ENCODE measurements at regions of chr17 and their contacts with region 1.

Region 1: GRCh38 chr17:74736513-74737298 is at the start of gene RAB37:
- DNase-seq: peak in 7 of 9 donors; percentile 35 to 59 (median 46)
- ATAC-seq: peak; percentile 66
- H3K4me3 ChIP-seq: peak within 1 kb of the TSS; percentile 95
- H3K4me3 Mint-ChIP-seq: peak within 1 kb of the TSS; percentile 85 to 97 (median 92)
- H3K27ac ChIP-seq: peak within 1 kb of the TSS; percentile 71
- H3K27ac Mint-ChIP-seq: peak within 1 kb of the TSS; percentile 79 to 99 (median 93)
- H3K4me1 ChIP-seq: peaks cover 39 to 40% of the 10 kb centered on the region in 2 donors
- H3K4me1 Mint-ChIP-seq: peaks cover 43 to 55% (median 52%) of the 10 kb centered on the region in 7 donors
- H3K27me3 ChIP-seq: no peaks in the 10 kb centered on the region
- H3K27me3 Mint-ChIP-seq: peaks cover 0 to 17% (median 0%) of the 10 kb centered on the region in 5 donors
- total RNA-seq, gene RAB37: 23.6 to 58.5 (median 34.4) TPM

Region 2: DNA sequence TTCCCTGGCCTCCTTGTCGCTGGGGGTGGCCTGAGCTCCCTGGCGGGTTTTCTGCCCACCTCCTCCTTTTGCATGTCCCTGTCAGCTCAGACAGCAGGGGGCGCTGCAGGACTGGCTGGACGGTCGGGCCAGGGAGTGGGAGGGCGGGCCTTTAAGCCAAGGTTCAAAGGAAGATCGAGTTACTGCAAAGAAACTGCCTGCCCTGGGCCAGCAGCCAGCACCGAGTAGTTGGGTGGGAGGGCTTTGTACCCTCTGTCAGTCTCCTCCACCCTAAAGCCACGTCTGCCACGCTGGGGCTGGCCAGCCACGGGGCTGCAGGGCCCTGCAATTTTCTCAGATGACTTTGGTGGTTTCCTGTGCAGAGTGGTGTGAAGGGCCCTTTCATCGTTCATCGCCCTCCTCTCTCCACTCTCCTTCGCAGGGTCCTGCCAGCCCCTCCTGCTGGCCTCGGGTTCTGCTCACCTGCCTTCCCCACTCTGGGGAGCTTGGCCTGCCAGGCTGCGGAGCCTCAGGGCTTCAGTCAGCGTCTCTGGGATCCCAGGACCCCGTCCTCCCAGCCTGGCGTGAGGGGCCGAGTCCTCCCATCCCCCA is 357.1 kb before region 1 on chr17:
- CTCF ChIA-PET with region 1: interaction called, 3 read pairs
- POLR2A ChIA-PET with region 1: no interaction called
- intact Hi-C with region 1: loop called in 1 of 2 experiments (anchors 2 kb)
- DNase-seq: peak; percentile 70 to 94 (median 85)
- ATAC-seq: peak; percentile 95
- H3K4me3 ChIP-seq: peak overlapping the region; percentile 19
- H3K4me3 Mint-ChIP-seq: peak overlapping the region in 1 of 10 donors; percentile 7
- H3K27ac ChIP-seq: no peak overlapping the region
- H3K27ac Mint-ChIP-seq: peak overlapping the region in 1 of 9 donors; percentile 41
- H3K4me1 ChIP-seq: peaks cover 8 to 10% of the 10 kb centered on the region in 2 donors
- H3K4me1 Mint-ChIP-seq: peaks cover 0 to 7% (median 0%) of the 10 kb centered on the region in 7 donors
- H3K27me3 ChIP-seq: no peaks in the 10 kb centered on the region
- H3K27me3 Mint-ChIP-seq: peaks cover 0 to 18% (median 0%) of the 10 kb centered on the region in 5 donors

Region 3: GRCh38 chr17:74659898-74660297 is 76.8 kb before region 1 on chr17:
- CTCF ChIA-PET with region 1: interaction called, 166 read pairs
- POLR2A ChIA-PET with region 1: interaction called, 37 read pairs
- intact Hi-C with region 1: loop called (anchors 1 kb)
- DNase-seq: no peak
- ATAC-seq: no peak
- H3K4me3 ChIP-seq: no peak overlapping the region
- H3K4me3 Mint-ChIP-seq: no peak overlapping the region
- H3K27ac ChIP-seq: no peak overlapping the region
- H3K27ac Mint-ChIP-seq: peak overlapping the region in 1 of 9 donors; percentile 32
- H3K4me1 ChIP-seq: peaks cover 0 to 3% of the 10 kb centered on the region in 2 donors
- H3K4me1 Mint-ChIP-seq: peaks cover 4 to 9% (median 6%) of the 10 kb centered on the region in 7 donors
- H3K27me3 ChIP-seq: peaks cover 0 to 3% of the 10 kb centered on the region in 2 donors
- H3K27me3 Mint-ChIP-seq: peaks cover 29 to 78% (median 36%) of the 10 kb centered on the region in 5 donors

Region 4: DNA sequence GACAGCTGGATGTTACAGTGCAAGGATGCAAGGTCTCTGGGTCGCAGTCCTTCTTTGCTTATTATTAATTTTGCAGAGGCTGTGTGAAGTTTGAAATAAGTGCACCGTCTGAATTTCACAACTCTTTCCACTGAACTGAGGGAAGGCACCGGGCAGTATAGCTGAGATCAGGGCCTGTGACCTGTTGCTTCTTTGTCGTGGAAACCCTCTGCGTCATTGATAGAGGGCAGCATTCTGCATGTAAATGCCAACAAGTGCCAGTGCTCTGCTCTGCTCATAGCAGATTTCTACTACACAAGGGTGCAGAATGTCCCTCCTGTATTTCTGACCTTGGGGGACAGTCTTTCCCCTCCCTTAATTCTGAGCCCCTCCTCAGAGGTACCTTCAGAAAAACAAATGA is 49.9 kb before region 1 on chr17:
- CTCF ChIA-PET with region 1: interaction called, 3 read pairs
- POLR2A ChIA-PET with region 1: interaction called, 3 read pairs
- intact Hi-C with region 1: loop called (anchors 2 to 10 kb)
- DNase-seq: no peak
- ATAC-seq: peak; percentile 39
- H3K4me3 ChIP-seq: no peak overlapping the region
- H3K4me3 Mint-ChIP-seq: no peak overlapping the region
- H3K27ac ChIP-seq: no peak overlapping the region
- H3K27ac Mint-ChIP-seq: no peak overlapping the region
- H3K4me1 ChIP-seq: no peaks in the 10 kb centered on the region
- H3K4me1 Mint-ChIP-seq: peaks cover 0 to 24% (median 0%) of the 10 kb centered on the region in 7 donors
- H3K27me3 ChIP-seq: no peaks in the 10 kb centered on the region
- H3K27me3 Mint-ChIP-seq: peaks cover 0 to 23% (median 7%) of the 10 kb centered on the region in 5 donors

Region 5: DNA sequence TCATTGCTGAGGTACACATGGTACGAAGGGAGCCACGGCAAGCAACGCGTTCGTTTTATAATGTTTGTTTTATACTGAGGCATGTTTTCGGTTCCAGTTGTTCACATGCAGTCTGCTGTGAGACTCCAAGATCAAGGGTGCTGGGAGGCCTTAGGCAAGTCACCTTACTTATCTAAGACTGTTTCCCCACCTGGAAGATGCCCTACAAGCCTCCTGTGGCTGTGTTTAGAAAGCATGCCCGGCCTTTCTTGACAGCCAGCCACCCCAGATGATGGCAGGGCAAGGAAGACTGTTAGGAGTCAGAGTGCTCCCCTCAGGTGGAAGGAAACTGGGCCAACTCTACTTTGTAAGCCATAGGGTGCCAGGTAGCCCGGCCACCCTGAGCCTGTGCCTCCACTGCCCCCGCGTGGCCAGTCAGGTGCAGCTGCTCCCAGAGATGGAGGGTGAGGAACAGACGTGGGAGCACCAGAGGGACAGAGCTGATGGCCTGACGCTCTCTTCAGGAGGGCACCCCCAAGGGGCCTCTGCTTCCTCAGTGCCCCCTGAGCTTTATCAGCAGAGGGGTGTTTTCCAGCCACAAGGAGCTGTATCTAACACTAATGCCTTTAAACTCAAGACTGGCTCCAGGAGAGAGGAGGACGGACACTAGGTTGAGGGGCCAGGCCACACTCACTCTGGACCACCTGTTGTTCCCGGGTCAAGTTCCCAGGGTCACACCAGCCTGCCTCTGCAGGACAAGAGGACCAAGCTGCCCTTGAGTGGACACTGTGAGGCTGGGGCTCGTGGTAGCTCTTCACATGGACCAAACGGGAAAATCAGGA is 34.0 kb after region 1 on chr17:
- CTCF ChIA-PET with region 1: interaction called, 26 read pairs
- POLR2A ChIA-PET with region 1: interaction called, 32 read pairs
- intact Hi-C with region 1: no loop called
- DNase-seq: peak; percentile 66 to 82 (median 78)
- ATAC-seq: peak; percentile 95
- H3K4me3 ChIP-seq: no peak overlapping the region
- H3K4me3 Mint-ChIP-seq: peak overlapping the region in 2 of 10 donors; percentile 16 to 21
- H3K27ac ChIP-seq: peak overlapping the region; percentile 4
- H3K27ac Mint-ChIP-seq: peak overlapping the region; percentile 42 to 92 (median 76)
- H3K4me1 ChIP-seq: peaks cover 9 to 17% of the 10 kb centered on the region in 2 donors
- H3K4me1 Mint-ChIP-seq: peaks cover 10 to 46% (median 38%) of the 10 kb centered on the region in 7 donors
- H3K27me3 ChIP-seq: no peaks in the 10 kb centered on the region
- H3K27me3 Mint-ChIP-seq: no peaks in the 10 kb centered on the region

Region 6: DNA sequence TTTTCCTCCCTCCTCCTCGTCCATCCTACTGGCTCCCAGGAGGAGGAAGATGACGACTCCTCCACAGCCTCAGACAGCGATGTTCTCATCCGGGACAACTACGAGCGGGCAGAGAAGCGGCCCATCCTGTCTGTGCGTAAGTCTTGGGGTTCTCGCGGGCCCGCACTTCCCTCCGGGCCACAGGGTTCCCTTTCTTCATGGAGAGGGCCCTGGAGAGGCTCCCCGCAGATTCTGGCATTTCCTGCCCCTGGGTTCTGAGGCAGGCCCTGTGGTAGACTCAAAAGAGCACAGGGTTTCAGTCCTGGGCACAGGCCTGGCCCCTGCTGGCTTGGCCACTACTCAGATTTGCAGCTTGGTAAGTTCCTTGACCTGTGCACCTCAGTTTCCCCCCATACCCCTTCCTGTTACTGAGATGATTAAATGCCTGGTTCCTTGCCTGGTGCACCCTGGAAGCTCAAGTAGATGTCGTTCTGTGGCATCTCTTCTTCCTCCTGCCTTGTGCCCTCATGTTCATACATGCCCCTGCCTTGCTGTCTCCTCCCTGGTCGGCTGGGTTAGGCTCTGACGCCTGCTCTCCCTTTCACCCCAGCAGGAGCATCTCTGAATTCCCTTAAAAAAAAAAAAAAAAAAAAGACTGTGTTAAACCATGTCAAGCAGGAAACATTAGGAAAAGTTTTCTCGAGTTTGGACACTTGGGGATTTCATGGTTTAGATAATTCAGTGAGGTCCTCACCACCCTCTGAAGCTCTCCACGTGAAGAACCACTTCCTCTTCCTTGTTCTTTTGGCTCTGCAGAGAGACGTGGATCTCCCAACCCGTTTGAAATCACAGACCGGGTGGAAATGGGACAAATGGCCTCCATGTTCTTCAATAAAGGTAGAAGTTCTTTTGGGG is 53.7 kb after region 1 on chr17:
- CTCF ChIA-PET with region 1: interaction called, 27 read pairs
- POLR2A ChIA-PET with region 1: no interaction called
- intact Hi-C with region 1: no loop called
- DNase-seq: peak in 2 of 9 donors; percentile 24
- ATAC-seq: no peak
- H3K4me3 ChIP-seq: no peak overlapping the region
- H3K4me3 Mint-ChIP-seq: peak overlapping the region; percentile 41 to 81 (median 72)
- H3K27ac ChIP-seq: peak overlapping the region; percentile 19
- H3K27ac Mint-ChIP-seq: peak overlapping the region; percentile 48 to 88 (median 81)
- H3K4me1 ChIP-seq: peaks cover 13 to 39% of the 10 kb centered on the region in 2 donors
- H3K4me1 Mint-ChIP-seq: peaks cover 28 to 64% (median 46%) of the 10 kb centered on the region in 7 donors
- H3K27me3 ChIP-seq: no peaks in the 10 kb centered on the region
- H3K27me3 Mint-ChIP-seq: no peaks in the 10 kb centered on the region